Dendritic cell treated with granulocyte-macrophage colony-stimulating factor and Interleukin-4, amounts not matched to agents 40 ng/mL and 50 ng/mL, for 4 days (primary cell): ENCODE measurements at regions of chr2 and their contacts with region 1.

Region 1: GRCh38 chr2:192286093-192286701 is 91.5 kb upstream of the TMEFF2 start:
- H3K4me3 Mint-ChIP-seq: no peak overlapping the region
- H3K27ac Mint-ChIP-seq: no peak overlapping the region
- H3K4me1 Mint-ChIP-seq: no peaks in the 10 kb centered on the region
- H3K27me3 Mint-ChIP-seq: no peaks in the 10 kb centered on the region

Region 2: DNA sequence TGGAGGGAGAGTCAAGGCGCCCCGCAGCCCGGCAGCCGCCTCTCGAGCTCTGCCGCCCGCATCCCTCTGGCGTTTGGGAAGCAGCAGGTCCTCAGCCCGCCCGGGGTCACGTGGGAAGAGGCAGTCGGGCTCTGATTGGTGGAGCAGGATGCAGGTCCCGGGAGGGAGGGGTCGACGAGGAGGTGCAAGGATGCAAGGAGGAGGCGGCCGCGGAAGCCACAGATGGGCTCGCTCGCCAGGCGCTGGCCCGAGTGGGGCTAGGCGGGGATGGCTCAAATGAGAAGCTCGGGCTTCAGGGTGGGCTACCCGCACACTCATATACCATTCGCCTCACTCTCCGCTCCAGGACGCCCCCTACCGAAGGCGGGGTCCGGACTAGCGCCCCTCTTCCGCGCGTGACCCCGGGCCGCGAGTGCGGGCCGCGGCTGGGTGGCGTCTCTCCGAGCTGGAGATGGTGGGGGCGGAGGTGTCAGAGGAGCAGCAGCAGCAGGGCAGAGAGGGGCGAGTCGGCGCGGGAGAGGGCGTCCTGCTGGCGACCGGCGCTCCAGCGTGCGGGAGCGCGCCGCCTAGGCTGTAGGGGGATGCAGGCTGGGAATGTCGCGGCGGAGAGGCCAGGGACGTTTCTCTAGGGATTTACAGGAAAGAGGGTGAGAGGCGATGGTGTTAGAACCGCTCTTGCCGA is 91.2 kb before region 1 on chr2 and contains the start of gene TMEFF2:
- intact Hi-C with region 1: loop called (anchors 10 kb)
- H3K4me3 Mint-ChIP-seq: peak within 1 kb of the TSS; percentile 84
- H3K27ac Mint-ChIP-seq: no peak within 1 kb of the TSS
- H3K4me1 Mint-ChIP-seq: peaks cover 36% of the 10 kb centered on the region
- H3K27me3 Mint-ChIP-seq: peaks cover 59% of the 10 kb centered on the region